ENCODE measurements at regions of chr19 and their contacts with region 1.

Region 1: GRCh38 chr19:40662921-40663694 is 27.3 kb downstream of the NUMBL start:
- DNase-seq: peak; percentile 69
- ATAC-seq: peak; percentile 74
- H3K4me3 ChIP-seq: peak overlapping the region; percentile 48 to 65
- H3K27ac ChIP-seq: peak overlapping the region; percentile 81
- H3K4me1 ChIP-seq: peaks cover 30 to 54% of the 10 kb centered on the region in 2 experiments
- H3K27me3 ChIP-seq: no peaks in the 10 kb centered on the region
- CTCF ChIP-seq: peak in 2 of 3 experiments; percentile 86 to 94; a peak in 5 of 6 replicates
- POLR2A ChIP-seq: no peak
- RAD21 ChIP-seq: peak; percentile 99

Region 2: GRCh38 chr19:40603389-40604135 is 59.5 kb before region 1 on chr19:
- CTCF ChIA-PET with region 1: no interaction called
- POLR2A ChIA-PET with region 1: no interaction called
- RAD21 ChIA-PET with region 1: no interaction called
- intact Hi-C with region 1: no loop called
- DNase-seq: peak; percentile 99
- ATAC-seq: peak; percentile 68
- H3K4me3 ChIP-seq: peak overlapping the region; percentile 62 to 67
- H3K27ac ChIP-seq: peak overlapping the region; percentile 87
- H3K4me1 ChIP-seq: peaks cover 36 to 86% of the 10 kb centered on the region in 2 experiments
- H3K27me3 ChIP-seq: no peaks in the 10 kb centered on the region
- CTCF ChIP-seq: no peak
- POLR2A ChIP-seq: no peak
- RAD21 ChIP-seq: no peak

Region 3: DNA sequence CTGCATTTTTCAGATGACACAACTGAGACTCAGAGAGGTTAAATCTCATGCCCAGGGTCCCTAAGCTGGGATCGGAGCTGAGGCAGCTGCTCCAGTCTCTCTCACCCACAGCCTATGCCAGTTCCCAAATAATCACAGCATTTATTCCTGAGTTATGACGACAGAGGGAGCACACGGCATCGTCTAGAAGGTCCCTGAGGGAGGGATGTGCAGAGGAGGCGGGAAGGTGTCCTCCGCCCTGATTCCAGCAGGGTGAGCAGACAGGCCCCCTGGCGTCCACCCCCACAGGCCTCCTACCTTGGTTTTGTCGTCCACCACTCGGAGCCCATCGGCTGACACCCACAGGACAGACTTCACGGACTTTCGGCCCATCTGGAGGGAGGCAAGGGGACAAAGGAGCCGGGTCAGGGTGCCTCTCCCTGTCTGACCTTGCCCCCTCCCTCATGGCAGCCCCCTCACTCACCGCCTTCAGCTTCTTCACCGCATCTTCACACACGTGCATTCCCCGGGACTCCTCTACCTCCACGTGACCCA is 19.4 kb after region 1 on chr19:
- CTCF ChIA-PET with region 1: no interaction called
- POLR2A ChIA-PET with region 1: no interaction called
- RAD21 ChIA-PET with region 1: no interaction called
- intact Hi-C with region 1: no loop called
- DNase-seq: no peak
- ATAC-seq: no peak
- H3K4me3 ChIP-seq: no peak overlapping the region
- H3K27ac ChIP-seq: no peak overlapping the region
- H3K4me1 ChIP-seq: no peaks in the 10 kb centered on the region
- H3K27me3 ChIP-seq: no peaks in the 10 kb centered on the region
- CTCF ChIP-seq: no peak
- POLR2A ChIP-seq: no peak
- RAD21 ChIP-seq: no peak

Region 4: DNA sequence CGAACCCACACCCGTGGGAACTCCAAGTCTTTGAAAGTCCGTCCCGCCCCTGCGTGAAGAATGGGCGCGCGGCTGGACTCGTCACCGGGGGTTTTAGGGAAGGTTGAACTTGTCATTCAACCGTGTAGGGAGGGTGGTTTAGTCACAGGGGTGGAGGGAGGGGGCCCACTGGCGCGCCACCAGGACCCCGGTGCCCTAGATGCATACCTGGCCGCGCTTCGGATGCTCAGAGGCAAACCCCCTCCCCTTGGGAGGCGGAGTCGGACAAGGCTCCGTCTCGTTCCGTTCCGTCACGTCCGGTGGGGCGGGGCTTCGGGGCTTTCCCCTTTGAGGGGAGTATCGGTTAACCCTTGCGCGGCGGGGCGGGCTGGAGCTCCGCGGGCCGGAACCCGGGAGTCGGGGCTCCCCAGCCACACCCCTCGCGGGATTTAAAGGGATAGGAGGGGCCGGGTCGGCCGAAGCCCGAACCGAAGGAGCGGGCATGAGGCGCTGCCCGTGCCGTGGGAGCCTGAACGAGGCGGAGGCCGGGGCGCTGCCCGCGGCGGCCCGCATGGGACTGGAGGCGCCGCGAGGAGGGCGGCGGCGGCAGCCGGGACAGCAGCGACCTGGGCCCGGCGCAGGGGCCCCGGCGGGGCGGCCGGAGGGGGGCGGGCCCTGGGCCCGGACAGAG is 53.7 kb after region 1 on chr19 and contains the starts of genes COQ8B and ITPKC:
- CTCF ChIA-PET with region 1: interaction called, 3 read pairs
- POLR2A ChIA-PET with region 1: interaction called, 4 read pairs
- RAD21 ChIA-PET with region 1: interaction called in 1 of 2 experiments, 3 read pairs
- intact Hi-C with region 1: loop called (anchors 1 kb)
- DNase-seq: peak; percentile 95
- ATAC-seq: peak; percentile 56
- H3K4me3 ChIP-seq: peak within 1 kb of the TSS; percentile 63 to 84
- H3K27ac ChIP-seq: peak within 1 kb of the TSS; percentile 92
- H3K4me1 ChIP-seq: peaks cover 13 to 61% of the 10 kb centered on the region in 2 experiments
- H3K27me3 ChIP-seq: no peaks in the 10 kb centered on the region
- CTCF ChIP-seq: no peak
- POLR2A ChIP-seq: no peak
- RAD21 ChIP-seq: no peak
- total RNA-seq, gene COQ8B: 47.1 TPM
- total RNA-seq, gene ITPKC: 11.4 TPM

Region 5: DNA sequence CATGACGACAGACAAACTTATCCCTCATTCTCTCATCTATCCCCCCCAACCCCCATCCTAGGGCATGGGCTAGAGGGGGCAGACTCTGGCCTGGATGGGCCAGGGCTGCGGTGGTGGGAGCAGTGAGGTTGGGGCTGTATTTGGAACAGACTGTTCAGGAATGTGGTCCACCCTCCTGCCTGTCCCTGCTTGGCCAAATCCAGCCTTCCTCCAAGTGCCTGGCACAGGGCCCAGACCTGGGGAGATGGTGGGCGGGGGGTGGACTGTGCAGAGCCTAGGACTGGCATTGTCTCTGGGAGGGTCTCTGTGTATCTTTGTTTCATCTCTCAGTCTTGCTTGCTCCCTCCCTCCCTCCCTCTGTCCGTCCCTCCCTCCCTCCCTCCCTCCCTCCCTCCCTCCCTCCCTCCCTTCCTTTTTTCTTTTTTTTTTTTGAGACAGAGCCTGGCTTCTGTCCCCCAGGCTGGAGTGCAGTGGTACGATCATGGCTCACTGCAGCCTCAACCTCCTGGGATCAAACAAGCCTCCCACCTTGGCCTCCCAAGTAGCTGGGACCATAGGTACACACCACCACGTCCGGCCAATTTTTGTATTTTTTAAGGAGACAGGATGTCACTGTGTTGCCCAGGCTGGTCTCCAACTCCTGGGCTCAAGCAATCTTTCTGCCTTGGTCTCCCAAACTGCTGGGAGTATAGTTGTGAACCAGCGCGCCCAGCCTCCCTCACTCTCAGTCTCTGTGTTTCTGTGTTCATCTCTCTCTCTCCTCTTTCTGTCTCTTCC is 150.3 kb after region 1 on chr19:
- CTCF ChIA-PET with region 1: interaction called, 25 read pairs
- POLR2A ChIA-PET with region 1: no interaction called
- RAD21 ChIA-PET with region 1: interaction called in 1 of 2 experiments, 4 read pairs
- intact Hi-C with region 1: no loop called
- DNase-seq: no peak
- ATAC-seq: no peak
- H3K4me3 ChIP-seq: no peak overlapping the region
- H3K27ac ChIP-seq: no peak overlapping the region
- H3K4me1 ChIP-seq: peaks cover 17 to 36% of the 10 kb centered on the region in 2 experiments
- H3K27me3 ChIP-seq: no peaks in the 10 kb centered on the region
- CTCF ChIP-seq: no peak
- POLR2A ChIP-seq: no peak
- RAD21 ChIP-seq: no peak

Region 6: DNA sequence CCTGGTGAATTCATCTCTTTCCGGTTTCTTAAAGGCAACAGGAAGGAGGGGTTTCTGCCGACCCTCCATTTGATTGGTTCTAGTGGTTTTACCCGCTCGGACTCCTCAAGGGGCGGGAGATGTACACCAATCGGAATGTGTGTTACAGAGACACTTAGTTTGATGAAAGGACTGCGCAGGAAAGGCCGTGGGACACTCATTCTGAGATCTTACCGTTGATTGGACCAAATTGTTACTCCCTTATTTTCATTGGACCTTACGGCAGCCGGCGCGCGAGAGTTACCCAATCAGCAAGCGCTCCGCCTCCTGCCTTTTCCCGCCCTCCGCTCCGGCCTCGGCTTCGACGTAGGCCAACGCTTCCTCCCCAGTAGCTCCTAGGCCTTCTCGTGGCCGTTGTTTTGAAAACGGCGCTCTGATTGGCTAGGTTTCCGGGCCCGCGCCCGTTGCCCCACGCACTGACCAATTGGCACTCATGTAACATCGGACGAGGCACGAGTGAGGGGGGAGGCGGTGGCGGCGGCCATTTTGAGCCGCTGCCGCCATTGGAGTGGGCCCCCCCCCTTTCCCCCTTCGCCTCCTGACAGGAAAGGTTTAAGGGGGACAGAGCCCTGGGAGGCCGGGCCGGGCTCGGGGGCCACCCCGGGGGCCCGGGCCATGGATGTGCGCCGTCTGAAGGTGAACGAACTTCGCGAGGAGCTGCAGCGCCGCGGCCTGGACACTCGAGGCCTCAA is 600.9 kb after region 1 on chr19 and contains the start of gene HNRNPUL1:
- CTCF ChIA-PET with region 1: no interaction called
- POLR2A ChIA-PET with region 1: no interaction called
- RAD21 ChIA-PET with region 1: no interaction called
- intact Hi-C with region 1: loop called (anchors 5 kb)
- DNase-seq: peak; percentile 100
- ATAC-seq: peak; percentile 71
- H3K4me3 ChIP-seq: peak within 1 kb of the TSS; percentile 92 to 94
- H3K27ac ChIP-seq: peak within 1 kb of the TSS; percentile 100
- H3K4me1 ChIP-seq: peaks cover 3 to 21% of the 10 kb centered on the region in 2 experiments; a peak in 3 of 4 replicates
- H3K27me3 ChIP-seq: no peaks in the 10 kb centered on the region
- CTCF ChIP-seq: peak in 2 of 3 experiments; percentile 8 to 22; a peak in 2 of 6 replicates
- POLR2A ChIP-seq: no peak
- RAD21 ChIP-seq: no peak
- total RNA-seq, gene HNRNPUL1: 201 TPM